H1 (cell line): ENCODE measurements at regions of chr20 and their contacts with region 1.

Region 1: GRCh38 chr20:23061734-23062561 is 12.5 kb upstream of the THBD start:
- DNase-seq: peak in 1 of 2 experiments; percentile 57
- H3K4me3 ChIP-seq: no peak overlapping the region
- H3K27ac ChIP-seq: 0 out of 2 replicates have a peak overlapping the region, but pooled peaks have one; percentile 4
- H3K4me1 ChIP-seq: peaks cover 0 to 9% (median 4%) of the 10 kb centered on the region in 4 experiments; a peak in 5 of 7 replicates
- H3K27me3 ChIP-seq: no peaks in the 10 kb centered on the region
- CTCF ChIP-seq: peak; percentile 45 to 81 (median 63)
- EP300 ChIP-seq: peak in 1 of 2 experiments; percentile 70; a peak in 1 of 3 replicates
- POLR2A ChIP-seq: no peak
- RAD21 ChIP-seq: peak; percentile 59 to 64

Region 2: DNA sequence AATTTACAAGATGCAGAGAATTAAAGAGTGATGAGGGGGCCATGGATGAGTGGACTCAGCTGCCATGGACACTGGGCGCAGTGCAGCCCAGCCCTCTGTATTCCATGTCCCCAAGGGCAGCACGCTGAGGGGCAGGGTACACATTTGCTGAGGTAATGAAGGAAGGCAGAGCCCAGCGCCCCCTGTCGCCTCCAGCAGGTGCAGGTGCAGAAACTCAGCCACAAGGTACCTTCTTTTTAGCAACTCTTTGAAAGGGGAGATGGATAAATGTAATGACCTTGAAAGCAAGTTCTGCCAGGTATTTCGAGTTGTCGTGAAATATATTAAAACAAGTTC is 17.0 kb after region 1 on chr20:
- CTCF ChIA-PET with region 1: interaction called, 43 read pairs
- POLR2A ChIA-PET with region 1: no interaction called
- DNase-seq: peak; percentile 19 to 70
- H3K4me3 ChIP-seq: no peak overlapping the region
- H3K27ac ChIP-seq: no peak overlapping the region
- H3K4me1 ChIP-seq: peaks cover 0 to 7% (median 0%) of the 10 kb centered on the region in 4 experiments; a peak in 1 of 7 replicates
- H3K27me3 ChIP-seq: no peaks in the 10 kb centered on the region
- CTCF ChIP-seq: peak; percentile 68 to 90 (median 88)
- EP300 ChIP-seq: no peak
- POLR2A ChIP-seq: no peak
- RAD21 ChIP-seq: peak; percentile 52 to 63

Region 3: GRCh38 chr20:23120945-23121758 is 59.2 kb after region 1 on chr20:
- CTCF ChIA-PET with region 1: no interaction called
- POLR2A ChIA-PET with region 1: no interaction called
- DNase-seq: no peak
- H3K4me3 ChIP-seq: no peak overlapping the region
- H3K27ac ChIP-seq: no peak overlapping the region
- H3K4me1 ChIP-seq: peaks cover 0 to 3% (median 0%) of the 10 kb centered on the region in 4 experiments; a peak in 3 of 7 replicates
- H3K27me3 ChIP-seq: no peaks in the 10 kb centered on the region
- CTCF ChIP-seq: no peak
- EP300 ChIP-seq: no peak
- POLR2A ChIP-seq: no peak
- RAD21 ChIP-seq: no peak

Region 4: DNA sequence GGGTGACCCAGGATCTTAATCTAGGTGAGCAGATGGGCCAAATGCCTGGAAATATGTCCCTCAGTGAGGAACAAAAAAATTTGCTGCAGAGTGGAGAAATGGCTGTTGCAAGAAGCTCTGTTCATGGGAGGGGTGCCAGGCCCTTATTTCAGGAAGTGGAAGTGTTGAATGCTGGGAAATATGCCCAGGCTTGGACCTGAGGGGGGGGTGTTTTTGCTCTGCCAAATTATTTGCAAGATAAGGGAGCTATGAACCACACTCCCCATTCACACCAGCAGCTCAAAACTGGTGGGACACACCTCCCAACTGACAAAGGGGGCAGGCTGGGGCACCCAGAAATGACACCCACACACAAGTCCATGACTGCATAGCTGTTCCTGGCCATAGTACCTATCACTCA is 618.2 kb after region 1 on chr20:
- CTCF ChIA-PET with region 1: no interaction called
- POLR2A ChIA-PET with region 1: no interaction called
- DNase-seq: no peak
- H3K4me3 ChIP-seq: no peak overlapping the region
- H3K27ac ChIP-seq: no peak overlapping the region
- H3K4me1 ChIP-seq: no peaks in the 10 kb centered on the region
- H3K27me3 ChIP-seq: no peaks in the 10 kb centered on the region
- CTCF ChIP-seq: no peak
- EP300 ChIP-seq: no peak
- POLR2A ChIP-seq: no peak
- RAD21 ChIP-seq: no peak